ENCODE measurements at regions of chr16 and their contacts with region 1.

Region 1: GRCh38 chr16:19086322-19087199 is 19.1 kb downstream of the COQ7 start:
- H3K4me3 ChIP-seq: peak overlapping the region; percentile 29
- H3K27ac ChIP-seq: no peak overlapping the region
- H3K4me1 ChIP-seq: peaks cover 4% of the 10 kb centered on the region
- CTCF ChIP-seq: peak; percentile 97

Region 2: GRCh38 chr16:18983565-18984424 is 102.8 kb before region 1 on chr16 and contains the start of gene TMC7:
- CTCF ChIA-PET with region 1: interaction called, 22 read pairs
- POLR2A ChIA-PET with region 1: interaction called, 6 read pairs
- H3K4me3 ChIP-seq: peak within 1 kb of the TSS; percentile 66
- H3K27ac ChIP-seq: peak within 1 kb of the TSS; percentile 38; the same call in 1 of the 2 replicates
- H3K4me1 ChIP-seq: no peaks in the 10 kb centered on the region
- CTCF ChIP-seq: peak; percentile 95

Region 3: GRCh38 chr16:19113453-19114351 is 27.1 kb after region 1 on chr16 and contains the start of gene ITPRIPL2:
- CTCF ChIA-PET with region 1: interaction called, 11 read pairs
- POLR2A ChIA-PET with region 1: no interaction called
- H3K4me3 ChIP-seq: peak within 1 kb of the TSS; percentile 69
- H3K27ac ChIP-seq: peak within 1 kb of the TSS; percentile 82
- H3K4me1 ChIP-seq: peaks cover 2% of the 10 kb centered on the region; the same call in 1 of the 2 replicates
- CTCF ChIP-seq: 0 out of 2 replicates have a peak, but pooled peaks have one; percentile 32

Region 4: GRCh38 chr16:19179546-19180490 is 93.3 kb after region 1 on chr16:
- CTCF ChIA-PET with region 1: interaction called, 94 read pairs
- POLR2A ChIA-PET with region 1: interaction called, 4 read pairs
- H3K4me3 ChIP-seq: no peak overlapping the region
- H3K27ac ChIP-seq: no peak overlapping the region
- H3K4me1 ChIP-seq: no peaks in the 10 kb centered on the region
- CTCF ChIP-seq: no peak

Region 5: GRCh38 chr16:19375561-19376158 is 289.1 kb after region 1 on chr16:
- CTCF ChIA-PET with region 1: interaction called, 33 read pairs
- POLR2A ChIA-PET with region 1: no interaction called
- H3K4me3 ChIP-seq: no peak overlapping the region
- H3K27ac ChIP-seq: no peak overlapping the region
- H3K4me1 ChIP-seq: no peaks in the 10 kb centered on the region
- CTCF ChIP-seq: peak; percentile 57; the same call in 1 of the 2 replicates

Region 6: DNA sequence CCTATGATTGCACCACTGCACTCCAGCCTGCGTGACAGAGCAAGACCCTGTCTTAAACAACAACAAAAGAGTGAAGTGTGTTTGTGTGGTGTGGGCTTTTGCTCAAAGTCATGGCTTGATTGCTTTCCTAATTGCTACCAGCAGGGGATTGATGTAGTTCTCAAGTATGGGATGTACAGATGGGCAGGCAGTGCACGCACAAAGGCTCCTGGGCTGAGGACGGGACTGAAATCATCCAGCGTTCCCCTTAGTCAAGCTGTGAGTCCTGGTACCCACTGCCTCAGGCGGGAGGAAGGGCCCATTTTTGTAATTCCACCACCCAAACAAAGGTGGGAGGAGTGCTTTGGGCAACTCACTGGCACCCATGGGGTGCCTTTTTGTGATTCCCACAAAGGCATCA is 388.1 kb after region 1 on chr16:
- CTCF ChIA-PET with region 1: no interaction called
- POLR2A ChIA-PET with region 1: no interaction called
- H3K4me3 ChIP-seq: no peak overlapping the region
- H3K27ac ChIP-seq: no peak overlapping the region
- H3K4me1 ChIP-seq: no peaks in the 10 kb centered on the region
- CTCF ChIP-seq: no peak